Caco-2 (cell line): ENCODE measurements at regions of chr17 and their contacts with region 1.

Region 1: DNA sequence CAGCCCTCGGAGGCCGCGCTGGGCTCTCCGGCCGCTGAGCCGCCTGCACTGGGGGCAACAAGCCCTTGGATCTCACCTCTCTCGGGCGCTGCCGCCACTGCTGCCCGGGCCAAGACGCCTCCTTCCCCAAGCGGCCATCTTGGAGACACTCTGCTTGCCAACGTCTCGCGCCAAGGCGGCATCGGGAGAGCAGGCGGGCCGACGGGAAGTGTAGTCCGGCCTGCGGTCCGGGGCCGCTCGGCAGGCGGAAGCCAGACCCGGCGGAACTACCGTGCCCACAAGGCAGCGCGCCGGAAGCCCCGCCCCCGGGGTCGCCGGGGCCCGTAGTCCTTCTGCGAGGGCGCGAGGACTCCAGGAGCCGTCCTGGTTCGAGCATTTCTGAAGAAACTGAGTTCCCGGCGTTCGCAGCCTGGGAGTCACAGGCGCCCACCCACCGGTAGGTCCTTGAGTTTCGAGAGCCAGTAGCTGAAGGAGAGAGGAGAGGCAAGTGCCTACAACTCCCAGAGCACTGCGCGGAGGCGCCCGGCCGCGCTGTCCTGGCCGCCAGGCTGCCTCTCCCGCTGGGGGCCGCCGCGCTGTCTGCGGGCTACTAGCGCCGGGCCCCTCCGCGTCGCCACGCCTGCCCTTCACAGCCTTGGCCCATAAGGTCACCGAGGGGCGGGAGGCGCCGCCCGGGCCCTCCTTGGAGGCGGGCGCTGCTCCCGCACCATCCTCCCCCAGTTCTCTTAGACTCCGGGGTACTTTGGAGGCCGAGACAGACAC is at the start of gene TMEM11:
- DNase-seq: peak; percentile 96 to 98
- H3K4me3 ChIP-seq: peak within 1 kb of the TSS; percentile 89
- H3K4me3 Mint-ChIP-seq: peak within 1 kb of the TSS; percentile 96
- H3K27ac Mint-ChIP-seq: peak within 1 kb of the TSS; percentile 98
- H3K4me1 ChIP-seq: peaks cover 21% of the 10 kb centered on the region; the same call in 1 of the 2 replicates
- H3K4me1 Mint-ChIP-seq: peaks cover 29% of the 10 kb centered on the region
- H3K27me3 ChIP-seq: no peaks in the 10 kb centered on the region
- H3K27me3 Mint-ChIP-seq: no peaks in the 10 kb centered on the region
- CTCF ChIP-seq: peak in 1 of 2 experiments; percentile 1
- total RNA-seq, gene TMEM11: 39.1 and 40.7 TPM in 2 replicates

Region 2: GRCh38 chr17:21252796-21253645 is 38.8 kb after region 1 on chr17 and contains the start of gene NATD1:
- CTCF ChIA-PET with region 1: no interaction called
- POLR2A ChIA-PET with region 1: interaction called, 4 read pairs
- intact Hi-C with region 1: loop called (anchors 1 kb)
- DNase-seq: peak; percentile 78 to 79
- H3K4me3 ChIP-seq: peak within 1 kb of the TSS; percentile 64
- H3K4me3 Mint-ChIP-seq: peak within 1 kb of the TSS; percentile 72
- H3K27ac Mint-ChIP-seq: no peak within 1 kb of the TSS
- H3K4me1 ChIP-seq: peaks cover 8% of the 10 kb centered on the region; the same call in 1 of the 2 replicates
- H3K4me1 Mint-ChIP-seq: peaks cover 13% of the 10 kb centered on the region
- H3K27me3 ChIP-seq: no peaks in the 10 kb centered on the region
- H3K27me3 Mint-ChIP-seq: no peaks in the 10 kb centered on the region
- CTCF ChIP-seq: no peak
- total RNA-seq, gene NATD1: 14.4 and 18.4 TPM in 2 replicates

Region 3: DNA sequence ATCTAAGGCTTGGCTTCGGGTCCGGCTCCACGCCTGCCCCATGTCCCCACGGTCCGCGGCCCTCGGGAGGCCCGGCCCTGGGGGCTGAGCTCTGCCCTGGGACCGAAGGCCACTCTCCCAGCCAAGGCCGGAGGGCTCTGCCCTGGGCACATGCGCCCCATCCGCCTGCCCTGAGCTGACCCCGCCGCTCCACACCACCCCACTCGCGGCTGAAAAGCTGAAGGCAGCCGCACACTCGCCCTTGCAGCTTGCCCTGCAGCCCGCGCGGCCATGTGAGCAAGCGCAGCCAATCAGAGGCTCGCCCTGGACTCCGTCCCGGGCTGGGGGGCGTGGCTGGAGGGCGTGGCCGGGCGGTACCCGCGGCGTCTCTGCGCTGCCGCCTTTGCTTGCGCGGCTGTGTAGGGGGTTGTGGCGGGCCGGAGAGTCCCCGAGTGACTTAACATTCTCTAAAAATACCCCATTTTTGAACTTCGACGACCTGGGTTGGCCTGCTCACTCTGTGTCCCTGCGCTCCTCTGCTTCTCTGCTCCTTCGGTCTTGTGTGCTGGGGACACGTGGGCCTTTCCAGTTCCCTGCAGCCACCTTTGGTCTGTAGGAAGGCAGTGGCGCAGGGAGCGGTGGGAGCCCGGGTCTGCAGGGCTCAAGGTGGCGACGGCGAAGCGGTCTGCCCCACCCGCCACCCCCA is 61.5 kb after region 1 on chr17:
- CTCF ChIA-PET with region 1: interaction called, 4 read pairs
- POLR2A ChIA-PET with region 1: interaction called, 4 read pairs
- intact Hi-C with region 1: loop called (anchors 2 kb)
- DNase-seq: peak; percentile 92 to 97
- H3K4me3 ChIP-seq: peak overlapping the region; percentile 87
- H3K4me3 Mint-ChIP-seq: peak overlapping the region; percentile 90
- H3K27ac Mint-ChIP-seq: peak overlapping the region; percentile 83
- H3K4me1 ChIP-seq: peaks cover 4% of the 10 kb centered on the region
- H3K4me1 Mint-ChIP-seq: peaks cover 7% of the 10 kb centered on the region
- H3K27me3 ChIP-seq: no peaks in the 10 kb centered on the region; the same call in 1 of the 2 replicates
- H3K27me3 Mint-ChIP-seq: no peaks in the 10 kb centered on the region
- CTCF ChIP-seq: peak in 1 of 2 experiments; percentile 35